ENCODE measurements at regions of chr11 and their contacts with region 1.

Region 1: GRCh38 chr11:7571640-7572000 is 57.8 kb downstream of the PPFIBP2 start:
- DNase-seq: no peak
- H3K4me3 ChIP-seq: no peak overlapping the region
- CTCF ChIP-seq: peak; percentile 89

Region 2: DNA sequence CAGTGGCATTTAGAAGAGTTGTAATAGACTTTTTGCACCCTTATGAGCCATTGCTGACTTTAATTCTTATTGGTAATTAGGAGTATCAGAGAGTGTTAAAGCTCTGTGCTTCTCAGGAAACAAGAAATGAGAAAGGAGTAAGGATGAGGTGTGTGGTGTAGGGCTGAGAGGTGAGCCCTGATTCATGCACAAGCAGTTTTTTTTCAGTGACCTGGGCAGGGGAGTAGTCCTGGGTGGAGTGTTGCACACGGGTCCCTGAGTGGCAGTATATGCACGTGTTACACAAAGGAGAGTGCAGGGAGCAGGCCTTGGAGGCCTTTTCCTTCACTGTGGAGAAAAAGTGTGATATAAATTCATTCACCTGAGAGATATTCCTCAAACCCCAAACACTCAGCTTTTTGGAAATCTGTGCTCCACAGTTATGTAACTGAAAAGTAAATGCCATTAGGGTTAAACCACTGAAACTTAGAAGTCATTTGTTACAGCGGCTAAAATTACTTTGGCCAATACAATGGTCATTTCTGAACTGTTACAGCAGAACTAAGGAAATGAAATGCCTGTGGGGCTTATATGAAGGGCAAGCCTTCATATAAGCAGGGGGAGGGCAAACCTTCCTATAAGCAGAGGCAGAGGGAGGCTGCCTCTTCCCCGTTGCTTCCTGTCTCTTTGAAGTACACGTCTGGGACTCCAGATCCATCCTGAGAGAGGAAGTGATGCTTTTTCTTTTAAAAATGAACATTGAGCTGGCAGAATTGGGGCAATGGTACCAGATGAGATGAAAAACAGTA is 148.9 kb before region 1 on chr11:
- CTCF ChIA-PET with region 1: no interaction called
- POLR2A ChIA-PET with region 1: no interaction called
- DNase-seq: no peak
- H3K4me3 ChIP-seq: no peak overlapping the region
- CTCF ChIP-seq: no peak

Region 3: GRCh38 chr11:7548659-7549274 is 22.9 kb before region 1 on chr11:
- CTCF ChIA-PET with region 1: interaction called, 22 read pairs
- POLR2A ChIA-PET with region 1: no interaction called
- DNase-seq: no peak
- H3K4me3 ChIP-seq: no peak overlapping the region
- CTCF ChIP-seq: no peak

Region 4: GRCh38 chr11:7630002-7630401 is 58.4 kb after region 1 on chr11:
- CTCF ChIA-PET with region 1: interaction called, 15 read pairs
- POLR2A ChIA-PET with region 1: no interaction called
- DNase-seq: no peak
- H3K4me3 ChIP-seq: no peak overlapping the region
- CTCF ChIP-seq: no peak

Region 5: DNA sequence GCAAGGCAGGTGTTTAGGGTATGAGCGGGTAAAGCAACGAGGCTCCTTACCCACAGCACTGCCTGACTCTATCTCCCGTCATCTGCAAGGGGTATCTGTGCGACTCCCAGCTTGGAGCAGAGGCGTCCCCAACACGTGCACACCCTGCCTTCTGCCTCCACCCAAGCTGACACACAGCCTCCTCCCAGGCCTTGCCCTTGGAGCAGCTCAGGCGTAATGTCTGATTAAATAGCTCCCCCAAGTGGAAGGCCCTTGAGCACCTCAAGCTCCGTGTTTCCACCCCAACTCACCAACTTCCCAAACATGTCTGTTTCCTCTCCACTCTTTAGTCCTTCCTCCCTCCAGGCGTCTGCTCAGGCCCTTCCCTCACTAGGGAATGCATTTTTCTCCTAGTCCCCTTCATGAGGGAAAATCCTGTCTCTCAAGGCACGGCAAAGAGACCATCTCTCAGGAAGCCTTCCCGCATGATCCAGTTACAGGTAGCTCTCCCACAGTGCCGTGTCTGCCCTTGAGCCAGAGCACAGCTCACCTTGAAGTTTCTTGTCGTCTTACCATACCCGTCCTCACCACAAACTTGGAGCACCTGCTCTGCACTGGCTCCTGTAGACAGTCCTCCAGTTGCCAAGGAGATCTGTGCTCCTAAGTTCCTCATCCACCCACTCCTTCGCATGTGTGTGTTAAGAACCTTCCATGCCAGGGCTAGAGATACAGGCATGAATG is 85.8 kb after region 1 on chr11:
- CTCF ChIA-PET with region 1: interaction called, 168 read pairs
- POLR2A ChIA-PET with region 1: no interaction called
- DNase-seq: no peak
- H3K4me3 ChIP-seq: no peak overlapping the region
- CTCF ChIP-seq: peak; percentile 59

Region 6: GRCh38 chr11:7688238-7688826 is 116.7 kb after region 1 on chr11:
- CTCF ChIA-PET with region 1: interaction called, 262 read pairs
- POLR2A ChIA-PET with region 1: no interaction called
- DNase-seq: no peak
- H3K4me3 ChIP-seq: no peak overlapping the region
- CTCF ChIP-seq: peak; percentile 69

Region 7: DNA sequence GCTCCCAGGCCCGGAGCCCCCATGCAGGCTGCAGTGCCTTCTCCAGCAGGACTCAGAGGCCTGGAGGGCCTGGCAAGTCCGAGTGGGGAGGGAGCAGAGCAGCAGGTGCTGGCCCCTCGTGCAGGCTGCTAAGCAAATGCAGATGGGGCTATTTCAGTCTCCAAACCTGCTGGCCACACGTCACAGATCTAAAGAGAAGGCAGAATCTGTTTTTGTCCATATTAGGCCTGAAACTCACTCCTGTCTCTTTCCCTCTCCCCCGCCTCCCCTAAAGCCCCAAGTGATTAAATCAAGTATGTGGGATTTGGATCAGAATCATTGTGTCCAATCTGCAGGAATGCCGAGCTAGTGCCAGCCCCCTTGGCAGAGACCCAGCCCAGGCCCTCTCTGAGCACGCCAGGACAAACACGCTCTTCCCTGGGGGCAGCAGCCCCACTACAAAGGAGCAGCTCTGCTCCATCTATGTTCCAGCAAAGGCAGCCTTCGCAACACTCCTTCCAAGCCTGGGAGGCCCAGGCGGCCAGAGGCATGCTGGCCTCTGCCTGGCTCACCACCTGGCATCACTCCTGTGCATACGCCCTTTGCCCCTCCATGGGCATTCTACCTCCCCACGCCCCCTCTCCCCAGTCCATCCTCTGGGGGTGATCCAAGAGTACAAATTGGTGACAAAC is 1137.5 kb after region 1 on chr11:
- CTCF ChIA-PET with region 1: no interaction called
- POLR2A ChIA-PET with region 1: no interaction called
- DNase-seq: peak; percentile 94
- H3K4me3 ChIP-seq: no peak overlapping the region
- CTCF ChIP-seq: no peak

Measured in AG04449 (cell line).